ENCODE measurements at regions of chr1 and their contacts with region 1.

Region 1: GRCh38 chr1:201481761-201482493 is 12.9 kb upstream of the PHLDA3 start:
- DNase-seq: peak; percentile 95
- H3K4me3 ChIP-seq: peak overlapping the region in 1 of 2 experiments; percentile 9; a peak in 1 of 4 replicates
- H3K27ac ChIP-seq: 0 out of 4 replicates have a peak overlapping the region, but pooled peaks of 1 of the 2 experiments have one; percentile 13
- H3K4me1 ChIP-seq: peaks cover 0 to 6% of the 10 kb centered on the region in 2 experiments; a peak in 2 of 4 replicates
- H3K27me3 ChIP-seq: no peaks in the 10 kb centered on the region
- CTCF ChIP-seq: peak; percentile 86
- EP300 ChIP-seq: no peak
- RAD21 ChIP-seq: peak; percentile 93

Region 2: DNA sequence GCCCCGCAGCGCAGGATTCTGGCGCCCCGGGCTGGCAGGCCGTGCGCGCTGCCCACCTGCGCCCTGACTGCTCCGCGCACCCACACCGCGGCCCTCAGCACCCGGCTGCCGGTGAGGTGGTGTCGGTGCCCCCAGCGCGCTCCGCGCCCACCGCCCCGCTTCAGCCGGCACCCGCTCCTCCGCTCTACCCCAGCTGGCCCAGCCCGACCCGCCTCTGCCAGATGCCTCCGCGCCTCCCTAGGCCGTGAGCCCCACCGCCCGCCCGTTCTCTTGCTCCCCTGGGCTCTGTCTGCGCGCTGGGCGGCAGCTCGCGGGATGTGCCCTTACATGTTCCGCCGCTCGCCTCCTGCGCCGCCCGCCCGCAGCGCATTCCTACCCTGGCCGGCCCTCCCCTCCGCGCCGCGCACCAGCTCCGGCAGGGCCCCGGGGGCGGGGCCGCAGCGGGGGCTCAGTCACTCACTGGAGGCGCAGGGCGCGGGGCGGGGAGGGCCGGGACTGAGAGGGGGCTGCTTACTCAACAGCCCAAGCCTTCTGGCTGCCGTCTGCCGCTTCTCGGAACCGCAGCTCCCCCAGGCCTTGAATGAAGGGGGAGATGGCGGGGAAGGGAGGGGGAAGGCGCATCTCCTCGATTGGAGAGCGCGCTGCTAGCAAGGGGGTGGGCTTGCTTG is 12.9 kb before region 1 on chr1 and contains the start of gene PHLDA3:
- CTCF ChIA-PET with region 1: interaction called, 63 read pairs
- POLR2A ChIA-PET with region 1: interaction called, 4 read pairs
- DNase-seq: peak; percentile 93
- H3K4me3 ChIP-seq: peak within 1 kb of the TSS; percentile 77 to 82
- H3K27ac ChIP-seq: peak within 1 kb of the TSS; percentile 83 to 94
- H3K4me1 ChIP-seq: peaks cover 13 to 29% of the 10 kb centered on the region in 2 experiments; a peak in 3 of 4 replicates
- H3K27me3 ChIP-seq: no peaks in the 10 kb centered on the region
- CTCF ChIP-seq: no peak
- EP300 ChIP-seq: no peak
- RAD21 ChIP-seq: no peak
- polyA plus RNA-seq, gene PHLDA3: 105 and 108 TPM in 2 replicates

Region 3: DNA sequence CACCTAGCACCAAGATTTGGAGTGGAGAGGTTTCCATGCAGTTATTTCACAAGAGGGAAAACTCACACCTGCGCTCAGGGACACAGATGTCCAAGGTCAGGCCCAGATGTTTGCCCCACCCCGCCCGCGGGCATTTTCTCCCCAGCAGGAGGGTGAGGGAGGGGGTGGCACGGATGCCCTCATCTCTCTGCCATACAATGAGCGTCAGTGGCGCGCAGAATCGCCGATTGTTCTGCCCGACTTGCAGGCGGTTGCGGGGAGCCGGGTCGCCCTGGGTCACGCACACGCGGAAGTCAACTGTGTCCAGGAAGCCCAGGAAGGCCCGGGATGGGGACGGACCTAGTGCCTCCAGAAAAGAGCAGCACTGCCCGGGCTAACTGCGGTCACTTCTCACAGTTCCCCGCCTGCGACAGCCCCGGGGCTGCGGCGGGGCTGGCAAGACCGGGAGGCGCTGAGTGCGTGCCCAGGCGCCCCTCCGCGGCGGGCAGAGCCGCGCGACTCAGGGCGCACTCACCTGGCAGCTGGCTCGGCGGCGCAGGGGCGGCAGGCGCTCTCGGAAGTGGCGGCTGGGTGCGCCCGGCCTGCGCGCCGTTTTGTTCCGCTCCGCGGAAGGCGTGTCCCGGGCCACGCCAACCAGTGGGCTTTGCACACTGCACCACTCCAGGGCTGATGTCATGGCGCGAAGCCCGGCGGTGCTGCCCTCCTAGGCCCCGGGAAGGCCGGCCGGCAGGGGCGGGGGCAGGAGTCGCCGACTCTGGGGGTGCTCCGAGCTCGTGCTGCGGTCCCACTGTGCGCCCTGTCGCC is 24.8 kb after region 1 on chr1 and contains the start of gene CSRP1:
- CTCF ChIA-PET with region 1: interaction called, 860 read pairs
- POLR2A ChIA-PET with region 1: interaction called, 3 read pairs
- DNase-seq: peak; percentile 96
- H3K4me3 ChIP-seq: peak within 1 kb of the TSS; percentile 57 to 65
- H3K27ac ChIP-seq: peak within 1 kb of the TSS; percentile 50 to 93
- H3K4me1 ChIP-seq: peaks cover 24 to 33% of the 10 kb centered on the region in 2 experiments; a peak in 3 of 4 replicates
- H3K27me3 ChIP-seq: no peaks in the 10 kb centered on the region
- CTCF ChIP-seq: no peak
- EP300 ChIP-seq: no peak
- RAD21 ChIP-seq: no peak
- polyA plus RNA-seq, gene CSRP1: 317 and 373 TPM in 2 replicates

Region 4: DNA sequence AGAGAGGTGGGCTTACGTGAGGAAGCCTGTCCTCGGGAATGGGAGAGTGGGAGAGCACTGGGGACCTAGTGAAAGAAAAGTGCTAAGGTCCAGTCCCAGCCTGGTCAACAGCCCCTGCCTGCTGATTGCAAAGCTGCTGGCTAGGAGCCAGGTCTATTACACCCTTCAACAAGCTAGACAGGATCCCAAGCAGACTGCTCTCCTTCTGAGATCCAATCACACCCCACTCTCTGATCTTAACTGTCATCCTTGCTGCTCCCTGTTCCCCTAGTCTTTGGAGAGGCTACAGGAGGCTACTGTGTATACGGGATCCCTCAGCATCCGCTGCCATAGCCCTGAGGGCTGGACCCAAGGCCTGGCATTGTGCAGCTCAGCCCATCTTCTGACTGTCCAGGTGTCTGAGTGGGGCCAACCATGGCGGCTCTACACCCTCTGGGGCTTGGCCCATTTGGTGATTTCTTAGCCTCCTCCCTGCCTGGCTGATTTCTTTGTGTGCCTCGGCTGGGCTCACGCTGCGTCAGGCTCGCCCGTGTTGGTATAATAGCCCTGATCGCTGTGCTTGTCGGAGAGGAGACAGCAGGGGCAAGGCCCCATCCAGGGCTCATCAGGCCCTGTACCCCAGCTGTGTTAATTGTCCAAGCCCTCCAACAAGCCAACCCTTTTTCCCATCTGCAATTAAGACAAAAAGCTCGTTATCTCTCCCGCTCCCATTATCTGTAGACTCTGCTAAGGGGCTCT is 100.9 kb after region 1 on chr1:
- CTCF ChIA-PET with region 1: no interaction called
- POLR2A ChIA-PET with region 1: no interaction called
- DNase-seq: peak; percentile 56
- H3K4me3 ChIP-seq: no peak overlapping the region
- H3K27ac ChIP-seq: peak overlapping the region; percentile 29 to 88; a peak in 3 of 4 replicates
- H3K4me1 ChIP-seq: peaks cover 19 to 44% of the 10 kb centered on the region in 2 experiments
- H3K27me3 ChIP-seq: no peaks in the 10 kb centered on the region
- CTCF ChIP-seq: no peak
- EP300 ChIP-seq: no peak
- RAD21 ChIP-seq: no peak

Region 5: GRCh38 chr1:201724766-201725118 is 242.8 kb after region 1 on chr1:
- CTCF ChIA-PET with region 1: no interaction called
- POLR2A ChIA-PET with region 1: no interaction called
- DNase-seq: no peak
- H3K4me3 ChIP-seq: no peak overlapping the region
- H3K27ac ChIP-seq: peak overlapping the region; percentile 85 to 90
- H3K4me1 ChIP-seq: peaks cover 23 to 49% of the 10 kb centered on the region in 2 experiments
- H3K27me3 ChIP-seq: no peaks in the 10 kb centered on the region
- CTCF ChIP-seq: no peak
- EP300 ChIP-seq: no peak
- RAD21 ChIP-seq: no peak

Region 6: GRCh38 chr1:201774224-201774982 is 292.5 kb after region 1 on chr1:
- CTCF ChIA-PET with region 1: no interaction called
- POLR2A ChIA-PET with region 1: no interaction called
- DNase-seq: no peak
- H3K4me3 ChIP-seq: no peak overlapping the region
- H3K27ac ChIP-seq: peak overlapping the region; percentile 70 to 99; a peak in 3 of 4 replicates
- H3K4me1 ChIP-seq: peaks cover 2 to 57% of the 10 kb centered on the region in 2 experiments
- H3K27me3 ChIP-seq: no peaks in the 10 kb centered on the region
- CTCF ChIP-seq: no peak
- EP300 ChIP-seq: peak in 1 of 2 experiments; percentile 87; a peak in 2 of 4 replicates
- RAD21 ChIP-seq: no peak

Measured in SK-N-SH (cell line).